ENCODE measurements at regions of chr19 and their contacts with region 1.

Region 1: GRCh38 chr19:57435062-57435978 is at the start of gene ZNF749:
- DNase-seq: peak; percentile 97
- ATAC-seq: peak; percentile 100
- H3K4me3 ChIP-seq: peak within 1 kb of the TSS; percentile 61 to 81 (median 69)
- H3K4me3 Mint-ChIP-seq: peak within 1 kb of the TSS; percentile 99
- H3K27ac ChIP-seq: peak within 1 kb of the TSS; percentile 18 to 78
- H3K27ac Mint-ChIP-seq: peak within 1 kb of the TSS; percentile 94
- H3K4me1 ChIP-seq: peaks cover 17% of the 10 kb centered on the region in 2 donors
- H3K4me1 Mint-ChIP-seq: peaks cover 28% of the 10 kb centered on the region
- H3K27me3 ChIP-seq: no peaks in the 10 kb centered on the region
- H3K27me3 Mint-ChIP-seq: no peaks in the 10 kb centered on the region
- CTCF ChIP-seq: no peak
- total RNA-seq, gene ZNF749: 17.4 and 20.1 TPM in 2 replicates

Region 2: DNA sequence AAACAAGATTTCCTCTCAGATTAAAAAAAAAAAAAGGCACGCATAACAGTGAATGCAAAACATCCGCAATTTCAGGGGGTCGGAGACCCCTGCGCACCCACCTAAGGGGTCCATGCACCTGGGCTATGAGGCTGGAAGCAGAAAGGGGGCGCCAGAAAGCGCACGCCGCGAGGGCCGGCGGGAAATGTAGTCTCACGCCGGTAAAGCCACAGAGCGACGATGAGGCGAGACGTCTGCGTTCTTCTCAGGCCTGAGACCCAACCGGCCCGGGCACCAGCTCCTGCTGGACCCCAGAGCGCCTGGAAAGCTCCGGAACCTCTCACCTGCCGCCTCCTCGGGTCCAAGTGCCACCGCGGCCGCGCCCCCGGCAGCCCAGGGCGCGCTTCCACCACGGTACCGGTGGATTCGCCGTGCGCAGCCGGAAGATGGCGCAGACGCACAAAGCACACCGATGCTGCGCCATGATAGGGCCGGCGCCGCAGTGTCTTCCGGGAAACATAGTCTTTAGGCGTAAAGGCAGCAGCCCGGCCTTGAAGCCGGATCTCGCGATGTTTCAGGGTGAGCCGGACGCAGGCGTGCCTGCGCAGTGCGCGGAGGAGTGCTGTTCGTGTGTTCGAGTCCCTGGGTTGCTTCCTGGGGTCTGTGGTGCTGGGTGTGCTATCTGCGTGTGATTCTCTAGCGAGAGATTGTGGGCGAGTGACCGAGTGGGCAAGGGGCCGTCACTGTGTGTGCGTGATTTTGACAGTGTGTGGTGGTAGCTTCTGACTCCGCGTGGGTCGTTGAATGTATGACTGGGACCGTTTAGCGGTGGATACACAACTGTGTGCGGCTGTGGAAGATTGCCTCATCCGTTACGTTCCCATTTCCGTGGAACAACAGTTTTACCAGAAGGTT is 1042.0 kb before region 1 on chr19 and contains the start of gene ZNF582:
- CTCF ChIA-PET with region 1: no interaction called
- POLR2A ChIA-PET with region 1: no interaction called
- intact Hi-C with region 1: loop called (anchors 5 kb)
- DNase-seq: peak; percentile 96
- ATAC-seq: peak; percentile 95
- H3K4me3 ChIP-seq: peak within 1 kb of the TSS; percentile 75 to 96 (median 82)
- H3K4me3 Mint-ChIP-seq: peak within 1 kb of the TSS; percentile 100
- H3K27ac ChIP-seq: peak within 1 kb of the TSS; percentile 93 to 98
- H3K27ac Mint-ChIP-seq: peak within 1 kb of the TSS; percentile 99
- H3K4me1 ChIP-seq: peaks cover 4 to 8% of the 10 kb centered on the region in 2 donors
- H3K4me1 Mint-ChIP-seq: peaks cover 17% of the 10 kb centered on the region
- H3K27me3 ChIP-seq: no peaks in the 10 kb centered on the region
- H3K27me3 Mint-ChIP-seq: no peaks in the 10 kb centered on the region
- CTCF ChIP-seq: peak; percentile 88
- total RNA-seq, gene ZNF582: 10.0 and 10.1 TPM in 2 replicates

Region 3: GRCh38 chr19:57338877-57339276 is 96.4 kb before region 1 on chr19:
- CTCF ChIA-PET with region 1: no interaction called
- POLR2A ChIA-PET with region 1: no interaction called
- intact Hi-C with region 1: no loop called
- DNase-seq: no peak
- ATAC-seq: no peak
- H3K4me3 ChIP-seq: no peak overlapping the region
- H3K4me3 Mint-ChIP-seq: no peak overlapping the region
- H3K27ac ChIP-seq: no peak overlapping the region
- H3K27ac Mint-ChIP-seq: no peak overlapping the region
- H3K4me1 ChIP-seq: no peaks in the 10 kb centered on the region
- H3K4me1 Mint-ChIP-seq: no peaks in the 10 kb centered on the region
- H3K27me3 ChIP-seq: no peaks in the 10 kb centered on the region
- H3K27me3 Mint-ChIP-seq: no peaks in the 10 kb centered on the region
- CTCF ChIP-seq: no peak

Region 4: DNA sequence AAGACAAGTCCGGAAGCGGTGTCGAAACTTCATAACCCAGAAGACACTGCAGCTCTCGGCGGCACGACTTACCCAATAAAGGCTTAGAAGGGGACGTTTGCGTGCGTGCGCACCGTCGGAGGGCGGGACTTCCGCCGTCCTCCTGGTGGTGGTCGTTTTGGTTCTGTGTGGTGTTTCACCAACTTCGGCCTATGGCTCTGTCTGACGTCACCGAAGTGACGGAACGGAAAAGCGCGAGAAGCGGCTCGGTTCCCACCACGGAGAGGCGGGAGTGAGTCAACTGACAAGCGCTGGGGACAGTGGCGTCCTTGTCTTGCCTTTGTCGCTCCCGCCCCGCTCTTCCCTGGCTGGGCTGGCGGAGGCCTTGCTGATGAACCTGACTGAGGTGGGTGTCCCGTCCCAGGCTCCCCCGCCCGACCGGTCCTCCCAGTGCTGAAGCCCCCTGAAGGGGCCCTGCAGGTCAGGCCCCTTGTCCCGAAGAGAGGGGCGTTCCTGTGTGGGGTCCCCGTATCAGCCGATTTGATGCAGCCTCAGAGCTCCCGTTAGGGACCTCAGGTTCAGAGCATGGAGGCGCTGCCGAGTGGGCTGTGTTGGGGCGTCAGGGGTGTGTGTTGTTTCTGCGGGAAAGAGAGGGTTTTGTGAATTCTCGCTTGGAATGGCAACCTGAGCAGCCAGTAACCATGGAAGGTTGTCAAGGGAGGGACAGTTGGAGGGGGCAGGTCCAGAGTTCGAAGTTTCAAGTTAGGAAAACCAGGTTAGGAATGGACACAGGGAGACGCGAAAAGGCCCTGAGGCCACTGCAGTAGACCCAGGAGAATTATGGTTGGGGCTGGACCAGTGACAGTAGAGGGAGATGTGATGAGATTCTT is 45.4 kb before region 1 on chr19 and contains the start of gene ZNF548:
- CTCF ChIA-PET with region 1: no interaction called
- POLR2A ChIA-PET with region 1: no interaction called
- intact Hi-C with region 1: loop called (anchors 1 kb)
- DNase-seq: peak; percentile 99
- ATAC-seq: peak; percentile 99
- H3K4me3 ChIP-seq: peak within 1 kb of the TSS; percentile 65 to 93 (median 89)
- H3K4me3 Mint-ChIP-seq: peak within 1 kb of the TSS; percentile 99
- H3K27ac ChIP-seq: peak within 1 kb of the TSS; percentile 93
- H3K27ac Mint-ChIP-seq: peak within 1 kb of the TSS; percentile 98
- H3K4me1 ChIP-seq: peaks cover 17 to 19% of the 10 kb centered on the region in 2 donors
- H3K4me1 Mint-ChIP-seq: peaks cover 31% of the 10 kb centered on the region
- H3K27me3 ChIP-seq: no peaks in the 10 kb centered on the region
- H3K27me3 Mint-ChIP-seq: no peaks in the 10 kb centered on the region
- CTCF ChIP-seq: peak; percentile 42
- total RNA-seq, gene ZNF548: 83.8 and 85.8 TPM in 2 replicates

Region 5: DNA sequence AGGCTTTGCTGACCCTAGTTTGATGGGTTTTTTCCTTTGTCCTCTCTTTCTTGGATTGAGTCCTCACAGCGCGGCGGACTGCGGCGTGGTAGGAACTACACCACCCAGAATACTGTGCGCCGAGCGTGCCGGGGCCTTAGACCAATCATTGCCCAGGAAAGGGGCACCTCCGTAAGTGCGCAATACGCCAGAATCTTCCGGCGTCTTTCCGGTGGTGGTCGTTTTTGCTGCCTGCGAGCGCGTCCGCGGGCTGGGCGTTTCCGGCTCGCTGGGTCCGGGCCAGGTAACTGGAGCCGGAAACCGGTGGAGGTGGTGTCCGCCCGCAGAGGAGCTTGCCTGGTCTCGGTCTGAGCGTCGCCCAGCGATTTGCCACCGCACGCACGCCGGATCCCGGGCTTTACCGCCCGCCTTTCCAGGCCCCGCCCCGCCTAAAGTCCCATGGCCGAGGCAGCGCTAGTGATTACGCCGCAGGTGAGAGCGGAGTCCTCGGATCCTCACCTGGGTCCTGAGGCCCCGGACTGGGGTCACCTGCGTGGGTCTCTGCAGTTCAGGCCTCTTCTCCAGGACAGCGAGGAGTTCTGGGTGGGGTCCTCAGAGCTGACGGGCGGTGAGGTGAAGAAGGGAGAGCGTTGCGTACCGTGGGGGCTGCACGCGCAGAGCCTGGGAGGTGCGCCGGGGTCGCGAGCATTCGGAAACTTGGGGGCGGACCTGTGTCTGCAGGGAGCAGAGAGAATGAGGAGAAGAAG is 92.0 kb after region 1 on chr19 and contains the start of gene ZNF549:
- CTCF ChIA-PET with region 1: no interaction called
- POLR2A ChIA-PET with region 1: no interaction called
- intact Hi-C with region 1: loop called (anchors 1 kb)
- DNase-seq: peak; percentile 93
- ATAC-seq: peak; percentile 99
- H3K4me3 ChIP-seq: peak within 1 kb of the TSS; percentile 68 to 93 (median 92)
- H3K4me3 Mint-ChIP-seq: peak within 1 kb of the TSS; percentile 91
- H3K27ac ChIP-seq: peak within 1 kb of the TSS; percentile 84 to 89
- H3K27ac Mint-ChIP-seq: peak within 1 kb of the TSS; percentile 91
- H3K4me1 ChIP-seq: peaks cover 10 to 17% of the 10 kb centered on the region in 2 donors
- H3K4me1 Mint-ChIP-seq: peaks cover 22% of the 10 kb centered on the region
- H3K27me3 ChIP-seq: no peaks in the 10 kb centered on the region
- H3K27me3 Mint-ChIP-seq: no peaks in the 10 kb centered on the region
- CTCF ChIP-seq: no peak
- total RNA-seq, gene ZNF549: 23.0 and 23.7 TPM in 2 replicates

Region 6: GRCh38 chr19:57682226-57682766 is 247.0 kb after region 1 on chr19:
- CTCF ChIA-PET with region 1: no interaction called
- POLR2A ChIA-PET with region 1: no interaction called
- intact Hi-C with region 1: loop called (anchors 1 kb)
- DNase-seq: no peak
- ATAC-seq: no peak
- H3K4me3 ChIP-seq: peak overlapping the region; percentile 65 to 98 (median 90)
- H3K4me3 Mint-ChIP-seq: peak overlapping the region; percentile 98
- H3K27ac ChIP-seq: peak overlapping the region; percentile 50 to 57
- H3K27ac Mint-ChIP-seq: peak overlapping the region; percentile 91
- H3K4me1 ChIP-seq: peaks cover 13 to 25% of the 10 kb centered on the region in 2 donors
- H3K4me1 Mint-ChIP-seq: peaks cover 38% of the 10 kb centered on the region
- H3K27me3 ChIP-seq: peaks cover 0 to 4% (median 0%) of the 10 kb centered on the region in 4 experiments
- H3K27me3 Mint-ChIP-seq: peaks cover 15% of the 10 kb centered on the region
- CTCF ChIP-seq: no peak

Region 7: DNA sequence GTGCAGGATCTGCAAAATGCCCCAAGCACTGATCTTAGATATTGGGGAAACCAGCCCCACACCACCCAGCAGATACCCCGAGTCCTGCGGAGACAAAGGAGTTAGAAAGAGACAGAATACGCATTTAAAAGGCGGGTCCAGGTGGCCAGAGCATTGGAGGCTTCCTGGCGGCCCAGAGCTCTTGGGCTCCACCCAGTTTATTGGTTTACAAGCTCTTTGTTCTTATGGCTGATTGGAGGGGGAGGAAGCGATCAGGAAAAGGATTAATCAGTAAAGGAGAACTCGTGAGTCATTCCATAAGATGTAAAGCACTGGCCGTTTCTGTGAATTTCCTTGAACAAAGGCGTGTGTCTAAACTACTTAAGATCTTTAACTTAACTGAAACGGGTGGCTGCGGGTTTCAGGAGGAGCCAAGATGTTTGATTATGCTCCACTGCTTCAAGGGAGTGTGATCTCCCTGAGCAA is 415.3 kb after region 1 on chr19:
- CTCF ChIA-PET with region 1: no interaction called
- POLR2A ChIA-PET with region 1: no interaction called
- intact Hi-C with region 1: loop called (anchors 1 kb)
- DNase-seq: peak; percentile 19
- ATAC-seq: no peak
- H3K4me3 ChIP-seq: peak overlapping the region; percentile 26 to 95 (median 76)
- H3K4me3 Mint-ChIP-seq: peak overlapping the region; percentile 97
- H3K27ac ChIP-seq: peak overlapping the region in 1 of 2 donors; percentile 93
- H3K27ac Mint-ChIP-seq: peak overlapping the region; percentile 94
- H3K4me1 ChIP-seq: peaks cover 7 to 16% of the 10 kb centered on the region in 2 donors
- H3K4me1 Mint-ChIP-seq: peaks cover 22% of the 10 kb centered on the region
- H3K27me3 ChIP-seq: no peaks in the 10 kb centered on the region
- H3K27me3 Mint-ChIP-seq: no peaks in the 10 kb centered on the region
- CTCF ChIP-seq: no peak

Measured in B cell (primary cell).